ENCODE measurements at regions of chr19 and their contacts with region 1.

Region 1: DNA sequence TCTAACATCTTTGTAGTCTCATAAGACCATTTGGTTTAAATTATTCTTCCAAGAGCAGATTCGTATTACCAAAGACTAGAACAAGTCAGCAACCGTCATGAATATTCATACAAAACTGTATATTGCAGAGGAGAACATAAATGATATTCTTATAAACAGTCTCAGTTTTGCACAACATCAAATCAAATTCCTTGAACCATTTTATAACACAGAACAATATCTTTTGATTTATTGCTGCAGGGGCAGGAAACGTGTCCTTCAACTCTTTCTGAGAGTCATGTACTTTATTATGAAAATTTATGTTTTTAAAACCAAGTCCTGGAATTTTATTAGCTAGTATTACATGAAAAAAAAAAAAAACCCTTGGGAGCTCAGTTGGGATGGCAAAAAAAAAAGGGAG is 26.2 kb downstream of the SIGLECL1 start:
- DNase-seq: no peak
- H3K4me3 Mint-ChIP-seq: no peak overlapping the region
- H3K27ac Mint-ChIP-seq: no peak overlapping the region
- H3K4me1 Mint-ChIP-seq: peaks cover 5% of the 10 kb centered on the region
- H3K27me3 Mint-ChIP-seq: peaks cover 8% of the 10 kb centered on the region

Region 2: GRCh38 chr19:50718255-50719118 is 558.6 kb before region 1 on chr19:
- intact Hi-C with region 1: loop called (anchors 5 kb)
- DNase-seq: no peak
- H3K4me3 Mint-ChIP-seq: no peak overlapping the region
- H3K27ac Mint-ChIP-seq: no peak overlapping the region
- H3K4me1 Mint-ChIP-seq: no peaks in the 10 kb centered on the region
- H3K27me3 Mint-ChIP-seq: peaks cover 55% of the 10 kb centered on the region

Measured in activated T-helper 1 cell treated with anti-CD3 and anti-CD28 coated beads, Interleukin-12 subunit alpha, Interleukin-12 subunit beta, Interleukin-2, Interleukin-4 antibody, amounts not matched to agents 30 ng/mL and 10 ng/mL and 1 ng/mL, durations not matched to agents 14 hours and 24 hours and 36 hours (primary cell).